ENCODE measurements at regions of chr16 and their contacts with region 1.

Region 1: DNA sequence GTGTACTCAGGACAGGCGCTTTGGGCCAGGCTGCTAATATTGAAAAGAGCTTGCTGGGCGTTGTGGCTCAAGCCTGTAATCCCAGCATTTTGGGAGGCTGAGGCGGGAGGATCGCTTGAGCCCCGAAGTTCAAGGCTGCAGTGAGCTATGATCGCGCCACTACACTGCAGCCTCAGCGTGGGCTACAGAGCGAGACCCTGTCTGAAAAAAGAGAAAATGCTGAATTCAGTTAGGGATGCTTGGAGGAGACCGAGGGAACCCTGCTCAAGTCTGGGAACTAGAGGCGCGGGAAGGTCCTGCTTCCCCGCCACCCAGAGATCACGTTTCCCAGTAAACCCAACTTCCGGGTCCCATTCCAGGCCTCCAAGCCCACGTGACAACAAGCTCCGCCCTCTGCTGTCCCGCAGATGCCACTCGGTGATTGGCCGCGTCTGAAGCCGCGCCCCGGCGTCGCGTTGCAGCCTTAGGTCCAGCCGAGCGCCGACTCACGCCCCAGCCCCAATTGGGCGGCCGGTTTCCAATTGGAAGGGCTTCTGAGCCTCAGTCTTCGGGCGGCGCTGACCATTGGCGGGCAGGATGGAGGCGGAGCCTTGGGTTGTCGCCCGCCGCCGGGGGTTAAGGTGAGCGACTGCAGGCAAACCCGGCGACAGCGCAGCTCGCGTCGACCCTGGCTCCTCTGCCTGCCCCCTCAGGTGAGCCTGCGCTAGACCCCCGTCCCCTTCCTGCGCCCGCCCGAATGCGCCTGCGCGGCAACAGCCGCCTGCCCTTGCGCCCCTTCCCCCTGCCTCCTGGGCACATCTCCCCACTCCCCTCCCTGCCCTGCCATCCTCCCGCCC is at the start of gene PHKG2:
- DNase-seq: peak; percentile 95
- ATAC-seq: peak; percentile 99
- H3K4me3 Mint-ChIP-seq: peak within 1 kb of the TSS; percentile 94
- H3K27ac Mint-ChIP-seq: peak within 1 kb of the TSS; percentile 95
- H3K4me1 Mint-ChIP-seq: peaks cover 20% of the 10 kb centered on the region
- H3K27me3 Mint-ChIP-seq: no peaks in the 10 kb centered on the region
- total RNA-seq, gene PHKG2: 48.2 to 48.9 TPM

Region 2: DNA sequence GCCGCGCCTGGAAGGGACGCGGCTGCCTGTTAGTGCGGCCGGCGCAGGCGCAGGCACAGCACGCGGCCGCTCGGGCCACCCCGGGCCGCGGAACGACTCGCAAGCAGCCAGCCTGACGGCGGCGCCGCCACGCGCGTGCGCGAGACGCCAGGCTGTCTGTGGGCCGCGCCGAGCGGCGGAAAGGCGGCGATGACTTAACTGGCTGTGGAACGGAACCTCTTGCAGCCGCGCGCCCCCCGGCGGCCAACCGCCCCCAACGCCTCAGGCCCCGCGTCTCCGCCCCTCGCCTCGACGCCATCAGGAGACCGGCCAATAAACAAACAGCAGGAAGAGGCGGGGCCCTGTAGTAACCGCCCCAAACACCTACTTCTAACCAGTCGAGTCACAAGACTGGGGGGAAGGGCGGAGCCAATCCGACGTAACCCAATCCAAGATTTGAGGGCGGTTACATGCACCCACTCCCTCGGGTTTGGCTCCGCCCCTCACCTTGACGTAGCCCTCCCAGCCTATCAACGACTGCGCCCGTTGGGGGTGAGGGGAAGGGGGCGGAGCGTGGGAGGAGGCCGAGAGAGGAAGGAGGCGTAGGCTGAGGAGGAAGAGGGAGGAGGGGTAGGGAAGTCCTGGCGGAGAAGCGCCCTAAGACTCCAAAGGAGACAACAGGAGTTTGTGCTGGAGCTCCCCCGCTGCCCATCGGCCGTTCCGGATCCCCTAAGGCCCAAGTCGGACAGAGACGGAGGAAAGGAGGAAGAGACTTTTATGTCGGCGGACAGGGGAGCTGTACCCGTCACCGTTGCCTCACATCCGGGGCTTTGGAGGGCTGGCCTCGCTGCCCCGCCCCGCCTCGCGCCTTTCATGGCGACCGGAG is 89.9 kb before region 1 on chr16 and contains the start of gene FBRS:
- POLR2A ChIA-PET with region 1: interaction called, 10 read pairs
- DNase-seq: peak; percentile 99
- ATAC-seq: peak; percentile 69
- H3K4me3 Mint-ChIP-seq: peak within 1 kb of the TSS; percentile 93
- H3K27ac Mint-ChIP-seq: peak within 1 kb of the TSS; percentile 100
- H3K4me1 Mint-ChIP-seq: peaks cover 30% of the 10 kb centered on the region
- H3K27me3 Mint-ChIP-seq: no peaks in the 10 kb centered on the region
- total RNA-seq, gene FBRS: 140 to 143 TPM

Region 3: GRCh38 chr16:30698139-30698815 is 49.7 kb before region 1 on chr16:
- POLR2A ChIA-PET with region 1: interaction called, 15 read pairs
- DNase-seq: peak; percentile 99
- ATAC-seq: peak; percentile 75
- H3K4me3 Mint-ChIP-seq: peak overlapping the region; percentile 100
- H3K27ac Mint-ChIP-seq: peak overlapping the region; percentile 99
- H3K4me1 Mint-ChIP-seq: peaks cover 35% of the 10 kb centered on the region
- H3K27me3 Mint-ChIP-seq: no peaks in the 10 kb centered on the region

Region 4: DNA sequence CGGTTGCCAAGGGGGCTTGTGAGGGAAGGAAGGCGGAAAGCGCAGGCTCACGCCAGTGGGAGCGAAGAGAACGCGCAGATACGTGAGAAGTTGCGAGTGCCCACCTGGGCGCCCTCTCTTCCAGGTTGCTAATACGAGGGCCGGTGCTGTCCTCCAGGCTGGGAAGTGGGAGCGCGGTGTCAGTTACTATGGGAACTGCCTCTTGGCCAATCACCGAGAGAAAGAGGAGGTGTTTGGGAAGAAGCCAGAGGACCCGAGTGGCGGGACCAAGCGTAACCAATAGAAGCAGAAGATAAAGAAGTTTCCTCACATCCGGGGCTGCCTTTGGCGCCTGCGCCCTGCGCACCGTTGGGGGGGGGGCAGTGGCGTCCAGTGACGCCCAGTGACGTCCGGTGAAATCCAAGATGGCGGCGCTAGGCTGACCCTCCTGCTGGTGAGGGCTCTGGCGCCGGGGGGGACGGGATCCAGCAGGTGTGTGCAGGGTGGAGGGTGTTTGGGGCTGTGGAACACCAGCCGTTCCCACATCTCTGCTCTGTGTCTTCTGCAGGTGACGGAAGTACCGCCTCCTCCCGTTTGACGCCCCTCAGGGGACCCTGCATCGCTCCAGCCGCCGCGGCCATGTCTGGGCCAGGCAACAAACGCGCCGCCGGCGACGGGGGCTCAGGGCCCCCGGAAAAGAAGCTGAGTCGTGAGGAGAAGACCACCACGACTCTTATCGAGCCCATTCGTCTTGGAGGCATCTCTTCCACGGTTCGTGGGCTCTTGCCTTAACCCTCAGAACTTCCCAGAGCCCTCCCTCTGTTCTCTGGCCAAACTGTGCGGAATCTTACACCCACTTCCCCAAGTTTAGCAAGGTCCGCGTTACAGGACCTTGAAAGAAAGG is 14.2 kb after region 1 on chr16 and contains the starts of genes CFAP119 and RNF40:
- POLR2A ChIA-PET with region 1: interaction called, 12 read pairs
- DNase-seq: peak; percentile 91
- ATAC-seq: peak; percentile 96
- H3K4me3 Mint-ChIP-seq: peak within 1 kb of the TSS; percentile 95
- H3K27ac Mint-ChIP-seq: peak within 1 kb of the TSS; percentile 88
- H3K4me1 Mint-ChIP-seq: peaks cover 17% of the 10 kb centered on the region
- H3K27me3 Mint-ChIP-seq: no peaks in the 10 kb centered on the region
- total RNA-seq, gene CFAP119: 4.4 TPM
- total RNA-seq, gene RNF40: 94.7 to 105 TPM

Region 5: DNA sequence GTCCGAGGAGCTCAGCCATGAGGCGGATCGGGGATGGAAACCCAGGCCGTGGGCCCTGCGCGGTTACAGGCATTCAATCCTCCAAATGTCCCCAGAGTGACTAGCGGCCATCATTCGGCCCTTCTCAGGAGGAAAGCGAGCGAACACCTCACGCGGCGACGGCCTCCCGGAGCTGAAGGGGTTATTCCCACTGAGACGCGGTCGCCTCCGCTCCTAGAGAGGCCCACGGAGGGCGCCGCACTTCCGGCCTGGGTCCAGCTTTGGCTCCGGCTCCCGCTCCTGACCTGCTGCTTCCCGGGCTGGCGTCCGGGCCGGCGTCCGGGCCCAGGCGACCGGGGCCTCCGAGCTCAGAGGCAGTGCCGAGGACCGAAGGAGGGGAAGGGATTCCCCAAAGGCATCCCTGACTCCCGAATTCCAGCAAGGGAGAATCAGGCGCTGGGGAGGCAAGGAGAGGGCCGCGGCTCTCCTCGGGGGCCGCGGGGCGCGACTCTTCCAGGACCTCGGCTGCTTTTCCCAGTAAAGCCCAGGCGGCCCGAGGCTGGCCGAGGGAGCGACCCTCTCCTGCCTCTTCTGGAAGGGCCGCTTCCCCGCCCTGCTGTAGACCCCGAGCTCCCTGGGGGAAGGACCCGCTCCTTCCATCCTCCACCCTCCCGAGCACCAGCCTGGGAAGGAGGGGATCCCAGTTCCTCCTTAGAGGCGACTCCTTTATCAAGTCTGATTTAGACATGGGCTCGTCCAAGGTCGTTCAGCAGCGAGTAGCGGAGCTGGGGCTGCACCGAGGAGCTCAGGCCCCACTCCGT is 57.6 kb after region 1 on chr16:
- POLR2A ChIA-PET with region 1: interaction called, 10 read pairs
- DNase-seq: peak; percentile 64
- ATAC-seq: peak; percentile 69
- H3K4me3 Mint-ChIP-seq: peak overlapping the region; percentile 67
- H3K27ac Mint-ChIP-seq: no peak overlapping the region
- H3K4me1 Mint-ChIP-seq: peaks cover 28% of the 10 kb centered on the region
- H3K27me3 Mint-ChIP-seq: peaks cover 10% of the 10 kb centered on the region

Region 6: GRCh38 chr16:30902029-30902972 is 154.3 kb after region 1 on chr16:
- POLR2A ChIA-PET with region 1: interaction called, 10 read pairs
- DNase-seq: peak; percentile 87
- ATAC-seq: peak; percentile 77
- H3K4me3 Mint-ChIP-seq: peak overlapping the region; percentile 99
- H3K27ac Mint-ChIP-seq: peak overlapping the region; percentile 100
- H3K4me1 Mint-ChIP-seq: peaks cover 36% of the 10 kb centered on the region
- H3K27me3 Mint-ChIP-seq: no peaks in the 10 kb centered on the region